Dorsolateral prefrontal cortex (tissue), 120 donors: ENCODE measurements at regions of chr7 and their contacts with region 1.

Region 1: GRCh38 chr7:55365675-55366460 is 731 bp downstream of the LANCL2 start:
- DNase-seq: peak; percentile 84 to 97 (median 93)
- H3K4me3 ChIP-seq: peak overlapping the region; percentile 62 to 99 (median 93)
- H3K27ac ChIP-seq: peak overlapping the region; percentile 90 to 100 (median 100)
- H3K27me3 ChIP-seq: no peaks in the 10 kb centered on the region
- CTCF ChIP-seq: peak in 42 of 56 donors; percentile 8 to 67 (median 38)

Region 2: GRCh38 chr7:55288070-55288824 is 77.6 kb before region 1 on chr7:
- intact Hi-C with region 1: loop called in 1 of 2 experiments (anchors 5 kb)
- DNase-seq: peak in 2 of 10 donors; percentile 22 to 32
- H3K4me3 ChIP-seq: no peak overlapping the region
- H3K27ac ChIP-seq: peak overlapping the region in 6 of 59 donors; percentile 16 to 60 (median 22)
- H3K27me3 ChIP-seq: no peaks in the 10 kb centered on the region
- CTCF ChIP-seq: peak in 1 of 56 donors; percentile 20

Region 3: GRCh38 chr7:55409482-55410225 is 43.8 kb after region 1 on chr7:
- intact Hi-C with region 1: loop called (anchors 2 to 5 kb)
- DNase-seq: no peak
- H3K4me3 ChIP-seq: no peak overlapping the region
- H3K27ac ChIP-seq: no peak overlapping the region
- H3K27me3 ChIP-seq: no peaks in the 10 kb centered on the region
- CTCF ChIP-seq: no peak

Region 4: DNA sequence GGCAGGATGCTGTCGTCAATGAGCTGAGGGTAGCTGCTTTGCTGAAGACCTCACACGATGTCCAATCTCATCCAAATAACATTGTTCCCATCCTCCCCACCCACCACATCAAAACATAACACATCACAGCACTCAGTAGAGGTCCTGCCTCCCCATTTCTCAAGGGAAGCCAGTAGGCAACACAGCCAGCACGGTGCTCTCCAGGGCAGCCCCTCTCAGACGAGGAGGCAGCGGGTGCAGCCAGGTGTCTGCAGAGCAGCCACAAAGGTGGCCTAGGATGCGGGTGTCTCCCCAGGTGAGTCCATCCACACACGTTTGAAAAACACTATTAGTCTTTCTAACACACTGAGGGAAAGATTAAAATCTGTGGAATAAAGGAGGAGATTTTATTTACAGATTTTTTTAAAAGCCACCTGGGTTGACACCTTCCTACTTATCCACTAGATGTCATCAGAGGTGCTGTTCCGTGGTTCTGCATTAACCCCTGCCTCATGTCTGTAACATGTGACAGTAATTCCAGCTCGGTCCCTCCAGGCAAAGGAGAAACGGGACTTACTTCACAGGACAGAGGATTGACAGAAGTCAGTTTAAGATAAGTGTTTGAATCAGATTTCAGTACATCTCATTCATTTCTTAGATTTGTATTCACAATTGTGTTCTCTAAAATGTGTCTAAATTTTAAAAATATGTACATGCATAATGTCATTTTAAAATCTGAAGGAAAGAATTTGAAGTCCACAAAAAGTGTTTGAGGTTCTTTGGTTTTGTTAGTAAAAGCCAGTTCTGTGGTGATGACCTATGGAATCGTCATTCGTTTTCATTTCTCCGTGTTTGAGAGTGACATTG is 67.3 kb after region 1 on chr7:
- intact Hi-C with region 1: no loop called
- DNase-seq: no peak
- H3K4me3 ChIP-seq: no peak overlapping the region
- H3K27ac ChIP-seq: peak overlapping the region in 10 of 59 donors; percentile 20 to 52 (median 35)
- H3K27me3 ChIP-seq: no peaks in the 10 kb centered on the region
- CTCF ChIP-seq: peak in 49 of 56 donors; percentile 13 to 64 (median 43)

Region 5: GRCh38 chr7:55572378-55573233 is 206.7 kb after region 1 on chr7 and contains the start of gene VOPP1:
- intact Hi-C with region 1: loop called (anchors 2 to 5 kb)
- DNase-seq: peak in 4 of 10 donors; percentile 35 to 74 (median 61)
- H3K4me3 ChIP-seq: peak within 1 kb of the TSS; percentile 70 to 95 (median 87)
- H3K27ac ChIP-seq: peak within 1 kb of the TSS; percentile 45 to 94 (median 86)
- H3K27me3 ChIP-seq: no peaks in the 10 kb centered on the region
- CTCF ChIP-seq: peak in 1 of 56 donors; percentile 7
- total RNA-seq, gene VOPP1: 43.2 to 95.6 (median 64.3) TPM

Region 6: DNA sequence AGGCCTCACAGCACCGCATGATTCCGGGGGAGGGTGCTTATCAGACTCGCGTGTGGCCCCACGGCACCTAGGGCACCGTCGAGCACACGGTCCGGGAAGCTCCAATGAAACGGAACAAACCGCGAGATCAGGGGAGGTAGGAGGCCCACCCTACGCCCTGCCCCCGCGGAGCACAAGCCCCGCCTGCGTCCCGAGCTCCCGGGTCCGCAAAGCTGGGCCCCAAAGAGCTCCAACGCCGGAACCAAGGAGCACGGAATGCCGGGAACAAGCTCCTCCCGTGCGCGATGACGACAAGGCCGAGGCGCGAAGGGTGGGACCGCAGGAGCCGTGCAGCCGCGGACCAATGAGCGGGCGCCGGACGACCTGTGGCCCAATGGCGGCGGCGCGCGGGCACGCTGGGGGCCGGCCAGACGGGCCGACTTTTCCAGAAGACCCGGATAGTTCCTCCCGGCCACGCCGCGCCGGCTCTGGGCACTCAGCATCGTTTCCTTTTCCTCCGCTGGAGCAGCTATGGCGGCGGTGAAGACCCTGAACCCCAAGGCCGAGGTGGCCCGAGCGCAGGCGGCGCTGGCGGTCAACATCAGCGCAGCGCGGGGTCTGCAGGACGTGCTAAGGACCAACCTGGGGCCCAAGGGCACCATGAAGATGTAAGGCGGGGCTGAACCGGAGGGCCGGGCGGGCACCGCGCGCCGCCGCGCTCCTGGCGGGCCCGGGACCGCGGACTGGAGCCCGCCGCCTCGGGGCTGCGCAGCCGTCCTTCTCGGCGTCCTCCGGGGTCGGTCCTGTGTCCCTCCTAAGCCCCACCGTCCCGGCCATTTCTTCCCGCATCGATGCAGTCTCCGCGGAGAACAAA is 685.7 kb after region 1 on chr7 and contains the starts of genes CCT6A and PSPH:
- intact Hi-C with region 1: loop called in 1 of 2 experiments (anchors 10 kb)
- DNase-seq: peak; percentile 96 to 100 (median 98)
- H3K4me3 ChIP-seq: peak within 1 kb of the TSS; percentile 63 to 100 (median 91)
- H3K27ac ChIP-seq: peak within 1 kb of the TSS; percentile 19 to 98 (median 92)
- H3K27me3 ChIP-seq: no peaks in the 10 kb centered on the region
- CTCF ChIP-seq: peak in 35 of 56 donors; percentile 6 to 58 (median 22)
- total RNA-seq, gene CCT6A: 38.3 to 105 (median 76.0) TPM
- total RNA-seq, gene PSPH: 11.1 to 44.3 (median 20.0) TPM